T-cell (primary cell): ENCODE measurements at regions of chr20 and their contacts with region 1.

Region 1: DNA sequence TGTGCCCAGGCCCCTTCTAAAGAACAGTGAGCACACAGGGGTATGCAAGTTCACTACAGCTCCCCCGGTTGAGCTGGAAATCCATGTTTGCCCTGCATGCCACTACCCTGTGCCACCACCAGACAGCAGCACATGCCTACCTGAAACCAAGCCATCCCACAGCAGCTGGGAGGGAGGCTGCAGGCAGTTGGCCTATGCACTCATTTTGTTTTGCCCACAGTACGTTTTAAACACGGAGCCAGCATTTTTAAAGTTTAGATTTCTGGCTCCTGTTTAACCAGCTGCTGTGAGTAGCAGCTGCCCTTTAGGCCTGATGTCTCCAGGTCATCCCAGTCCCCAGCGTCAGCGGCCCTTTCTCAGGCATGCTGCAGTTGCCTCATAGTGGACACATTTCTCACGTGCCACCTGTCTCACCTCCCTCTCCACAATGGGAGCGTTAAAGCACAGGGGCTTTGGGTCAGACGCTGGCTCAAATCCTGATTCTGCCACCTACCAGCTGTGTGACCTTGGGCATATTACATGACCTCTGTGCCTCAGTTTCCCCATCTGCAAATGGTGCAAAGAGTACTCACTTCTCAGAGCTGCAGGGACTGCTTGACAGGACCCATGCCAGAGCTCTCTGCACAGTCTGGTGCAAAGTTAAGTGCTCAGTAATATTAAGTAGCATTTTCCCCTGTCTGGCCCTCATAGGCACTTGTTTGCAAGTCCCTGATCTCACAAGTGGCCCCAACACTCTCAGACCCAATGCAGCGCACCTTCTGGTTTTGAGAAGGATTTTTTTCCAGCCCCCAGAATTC is 8.1 kb upstream of the UBE2V1 start:
- DNase-seq: peak; percentile 41 to 80 (median 60)
- ATAC-seq: peak; percentile 72 to 82 (median 75)
- H3K4me3 ChIP-seq: no peak overlapping the region
- H3K4me3 Mint-ChIP-seq: no peak overlapping the region
- H3K27ac ChIP-seq: no peak overlapping the region
- H3K27ac Mint-ChIP-seq: peak overlapping the region in 1 of 2 donors; percentile 6
- H3K4me1 ChIP-seq: peaks cover 0 to 9% of the 10 kb centered on the region in 2 experiments
- H3K4me1 Mint-ChIP-seq: peaks cover 7 to 9% (median 7%) of the 10 kb centered on the region in 3 donors
- H3K27me3 ChIP-seq: no peaks in the 10 kb centered on the region
- H3K27me3 Mint-ChIP-seq: no peaks in the 10 kb centered on the region

Region 2: DNA sequence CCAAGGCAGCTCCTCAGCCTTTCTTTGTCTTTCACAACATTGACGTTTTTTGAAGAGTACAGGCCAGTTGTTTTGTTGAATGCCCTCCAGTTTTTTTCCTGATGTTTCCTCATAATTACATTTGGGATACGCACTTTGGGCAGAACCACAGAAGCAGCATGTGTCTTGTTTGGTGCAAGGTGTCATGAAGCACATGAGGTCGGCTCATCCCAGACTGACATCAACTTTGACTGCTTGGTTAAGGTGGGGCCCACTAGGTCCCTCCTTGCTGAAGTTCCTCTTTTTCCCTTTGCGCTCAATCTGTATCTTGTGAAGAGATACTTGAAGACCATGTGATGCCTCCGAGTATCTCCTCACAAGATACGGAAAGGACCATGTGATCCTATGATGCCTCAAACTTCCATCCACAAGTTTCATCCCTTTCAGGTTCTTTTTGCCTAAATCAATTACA is 127.8 kb before region 1 on chr20:
- CTCF ChIA-PET with region 1: no interaction called
- POLR2A ChIA-PET with region 1: no interaction called
- DNase-seq: no peak
- ATAC-seq: no peak
- H3K4me3 ChIP-seq: no peak overlapping the region
- H3K4me3 Mint-ChIP-seq: no peak overlapping the region
- H3K27ac ChIP-seq: no peak overlapping the region
- H3K27ac Mint-ChIP-seq: no peak overlapping the region
- H3K4me1 ChIP-seq: peaks cover 0 to 2% of the 10 kb centered on the region in 2 experiments
- H3K4me1 Mint-ChIP-seq: no peaks in the 10 kb centered on the region
- H3K27me3 ChIP-seq: peaks cover 0 to 15% of the 10 kb centered on the region in 2 experiments
- H3K27me3 Mint-ChIP-seq: peaks cover 6 to 7% of the 10 kb centered on the region in 2 donors

Region 3: GRCh38 chr20:50138479-50139393 is 17.6 kb after region 1 on chr20:
- CTCF ChIA-PET with region 1: interaction called, 3 to 5 read pairs
- POLR2A ChIA-PET with region 1: interaction called, 3 to 16 read pairs
- DNase-seq: no peak
- ATAC-seq: no peak
- H3K4me3 ChIP-seq: no peak overlapping the region
- H3K4me3 Mint-ChIP-seq: no peak overlapping the region
- H3K27ac ChIP-seq: no peak overlapping the region
- H3K27ac Mint-ChIP-seq: no peak overlapping the region
- H3K4me1 ChIP-seq: no peaks in the 10 kb centered on the region
- H3K4me1 Mint-ChIP-seq: peaks cover 31 to 37% (median 33%) of the 10 kb centered on the region in 3 donors
- H3K27me3 ChIP-seq: no peaks in the 10 kb centered on the region
- H3K27me3 Mint-ChIP-seq: no peaks in the 10 kb centered on the region

Region 4: GRCh38 chr20:50153485-50154377 is 32.6 kb after region 1 on chr20 and contains the start of gene PEDS1:
- CTCF ChIA-PET with region 1: interaction called, 4 to 20 read pairs
- POLR2A ChIA-PET with region 1: interaction called in 1 of 2 experiments, 4 read pairs
- DNase-seq: peak; percentile 45 to 90 (median 71)
- ATAC-seq: peak; percentile 97 to 98 (median 98)
- H3K4me3 ChIP-seq: peak within 1 kb of the TSS; percentile 89 to 95
- H3K4me3 Mint-ChIP-seq: peak within 1 kb of the TSS; percentile 85 to 89 (median 87)
- H3K27ac ChIP-seq: peak within 1 kb of the TSS; percentile 78
- H3K27ac Mint-ChIP-seq: peak within 1 kb of the TSS; percentile 89 to 95
- H3K4me1 ChIP-seq: peaks cover 20 to 53% of the 10 kb centered on the region in 2 experiments
- H3K4me1 Mint-ChIP-seq: peaks cover 41 to 51% (median 42%) of the 10 kb centered on the region in 3 donors
- H3K27me3 ChIP-seq: no peaks in the 10 kb centered on the region
- H3K27me3 Mint-ChIP-seq: no peaks in the 10 kb centered on the region
- total RNA-seq, gene PEDS1: 17.6 to 20.0 (median 18.3) TPM

Region 5: DNA sequence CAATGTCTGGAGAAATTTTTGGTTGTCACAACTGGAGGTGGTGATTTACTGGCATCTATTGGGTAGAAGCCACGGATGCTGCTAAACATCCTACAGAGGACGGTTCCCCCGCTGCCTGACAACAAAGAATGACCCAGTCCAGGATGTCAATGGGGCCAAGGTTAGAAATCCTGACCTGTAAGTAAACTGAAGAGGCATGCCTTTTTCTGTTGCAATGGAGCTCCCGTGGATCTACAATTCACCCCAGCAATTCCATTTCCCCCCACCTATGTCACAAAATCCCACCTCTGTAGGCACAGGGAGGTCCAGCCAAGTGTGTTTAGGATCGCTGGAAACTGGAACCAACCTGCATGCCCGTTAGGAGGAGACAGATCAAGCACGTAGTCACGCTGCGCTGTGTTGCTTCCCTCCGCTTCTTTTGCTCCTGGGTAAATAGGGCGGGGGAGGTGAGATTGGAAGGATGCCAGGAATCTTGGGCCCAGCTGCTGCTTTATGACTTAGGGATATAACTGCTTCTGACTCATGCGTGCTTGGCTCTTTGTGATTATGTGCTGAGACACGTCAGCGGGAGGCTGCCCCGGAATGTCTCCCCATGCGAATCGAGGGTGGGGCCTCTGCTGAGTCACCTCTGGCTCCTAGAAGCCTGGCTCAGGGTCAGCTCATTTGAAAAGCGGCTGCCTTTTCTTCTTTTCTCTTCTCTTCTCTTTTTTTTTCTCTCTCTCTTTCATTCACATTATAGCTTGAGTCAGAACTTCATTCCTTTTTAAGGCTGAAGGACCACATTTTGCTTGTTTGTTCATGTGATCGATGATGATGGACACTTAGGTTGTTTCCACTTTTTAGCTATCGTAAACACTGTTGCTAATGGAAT is 44.8 kb after region 1 on chr20:
- CTCF ChIA-PET with region 1: interaction called, 43 to 45 read pairs
- POLR2A ChIA-PET with region 1: interaction called in 1 of 2 experiments, 3 read pairs
- DNase-seq: peak; percentile 14 to 78 (median 38)
- ATAC-seq: peak; percentile 83 to 99 (median 92)
- H3K4me3 ChIP-seq: peak overlapping the region in 1 of 2 donors; percentile 9
- H3K4me3 Mint-ChIP-seq: peak overlapping the region; percentile 41 to 55 (median 54)
- H3K27ac ChIP-seq: no peak overlapping the region
- H3K27ac Mint-ChIP-seq: peak overlapping the region; percentile 28 to 42
- H3K4me1 ChIP-seq: peaks cover 0 to 11% of the 10 kb centered on the region in 2 experiments
- H3K4me1 Mint-ChIP-seq: peaks cover 9 to 14% (median 10%) of the 10 kb centered on the region in 3 donors
- H3K27me3 ChIP-seq: peaks cover 0 to 17% of the 10 kb centered on the region in 2 experiments
- H3K27me3 Mint-ChIP-seq: peaks cover 5 to 7% of the 10 kb centered on the region in 2 donors

Region 6: GRCh38 chr20:50179507-50180016 is 58.5 kb after region 1 on chr20:
- CTCF ChIA-PET with region 1: interaction called, 5 to 55 read pairs
- POLR2A ChIA-PET with region 1: interaction called in 1 of 2 experiments, 5 read pairs
- DNase-seq: no peak
- ATAC-seq: peak in 1 of 4 experiments; percentile 12
- H3K4me3 ChIP-seq: no peak overlapping the region
- H3K4me3 Mint-ChIP-seq: no peak overlapping the region
- H3K27ac ChIP-seq: no peak overlapping the region
- H3K27ac Mint-ChIP-seq: no peak overlapping the region
- H3K4me1 ChIP-seq: peaks cover 0 to 2% of the 10 kb centered on the region in 2 experiments
- H3K4me1 Mint-ChIP-seq: no peaks in the 10 kb centered on the region
- H3K27me3 ChIP-seq: peaks cover 0 to 13% of the 10 kb centered on the region in 2 experiments
- H3K27me3 Mint-ChIP-seq: peaks cover 0 to 8% of the 10 kb centered on the region in 2 donors